Activated CD4-positive, alpha-beta T cell treated with anti-CD3 and anti-CD28 coated beads for 36 hours (primary cell): ENCODE measurements at regions of chr2 and their contacts with region 1.

Region 1: DNA sequence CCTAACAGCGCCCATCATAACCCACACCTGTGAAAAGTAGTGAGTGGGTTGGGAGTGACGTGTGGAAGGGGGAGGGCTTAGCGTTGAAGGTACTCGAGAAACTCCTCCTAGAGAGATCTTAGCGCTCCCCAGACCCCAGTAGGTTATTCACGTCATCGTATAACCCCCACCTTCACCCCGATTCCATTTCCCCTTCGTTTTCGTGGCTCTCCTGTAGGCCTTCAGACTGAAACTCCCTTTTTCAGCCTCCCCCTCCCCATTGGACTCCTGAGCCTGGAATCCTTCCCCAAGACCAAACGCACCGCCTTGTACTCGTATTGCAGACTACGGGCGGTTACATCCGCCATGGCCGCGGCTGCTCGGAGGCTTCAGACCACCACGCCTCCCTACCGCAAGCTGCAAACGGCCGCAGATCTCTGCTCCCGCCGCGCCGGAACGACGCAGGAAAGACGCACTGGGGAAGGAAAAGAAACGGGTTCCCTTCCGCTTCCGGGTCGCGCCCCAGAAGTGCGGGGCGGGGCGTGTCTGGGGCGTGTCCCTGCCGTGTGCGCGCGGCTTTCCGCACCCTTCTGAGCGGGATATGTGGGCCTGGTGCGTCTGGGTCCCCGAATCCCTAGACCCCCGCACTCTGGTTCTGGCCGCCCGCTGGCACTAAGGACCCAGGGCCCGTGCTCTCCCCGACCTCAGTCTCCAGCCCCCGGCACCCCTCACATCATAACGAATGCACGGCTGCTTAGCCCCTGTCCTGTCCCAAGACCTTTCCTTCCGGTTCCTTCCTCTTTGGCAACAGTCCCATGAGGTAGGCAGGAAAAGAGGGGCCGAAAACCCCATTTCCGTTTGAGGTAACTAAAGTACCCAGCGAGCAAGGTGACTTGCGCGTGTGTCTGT is at the start of gene SNRNP200:
- DNase-seq: peak; percentile 96
- ATAC-seq: peak; percentile 97
- H3K4me3 Mint-ChIP-seq: peak within 1 kb of the TSS; percentile 100
- H3K27ac Mint-ChIP-seq: peak within 1 kb of the TSS; percentile 99
- H3K4me1 Mint-ChIP-seq: peaks cover 46% of the 10 kb centered on the region
- H3K27me3 Mint-ChIP-seq: no peaks in the 10 kb centered on the region
- total RNA-seq, gene SNRNP200: 176 to 198 TPM

Region 2: GRCh38 chr2:96174251-96175144 is 130.8 kb before region 1 on chr2:
- CTCF ChIA-PET with region 1: no interaction called
- POLR2A ChIA-PET with region 1: no interaction called
- intact Hi-C with region 1: no loop called
- DNase-seq: peak; percentile 92
- ATAC-seq: peak; percentile 96
- H3K4me3 Mint-ChIP-seq: peak overlapping the region; percentile 60
- H3K27ac Mint-ChIP-seq: peak overlapping the region; percentile 88
- H3K4me1 Mint-ChIP-seq: peaks cover 22% of the 10 kb centered on the region
- H3K27me3 Mint-ChIP-seq: no peaks in the 10 kb centered on the region

Region 3: GRCh38 chr2:96320728-96321622 is 15.6 kb after region 1 on chr2:
- CTCF ChIA-PET with region 1: interaction called, 7 read pairs
- POLR2A ChIA-PET with region 1: interaction called, 7 read pairs
- intact Hi-C with region 1: loop called (anchors 1 kb)
- DNase-seq: peak; percentile 54
- ATAC-seq: peak; percentile 10
- H3K4me3 Mint-ChIP-seq: peak overlapping the region; percentile 73
- H3K27ac Mint-ChIP-seq: peak overlapping the region; percentile 63
- H3K4me1 Mint-ChIP-seq: peaks cover 52% of the 10 kb centered on the region
- H3K27me3 Mint-ChIP-seq: peaks cover 10% of the 10 kb centered on the region

Region 4: GRCh38 chr2:96336104-96336775 is 30.9 kb after region 1 on chr2:
- CTCF ChIA-PET with region 1: interaction called, 6 read pairs
- POLR2A ChIA-PET with region 1: interaction called, 7 read pairs
- intact Hi-C with region 1: loop called (anchors 1 kb)
- DNase-seq: no peak
- ATAC-seq: no peak
- H3K4me3 Mint-ChIP-seq: peak overlapping the region; percentile 88
- H3K27ac Mint-ChIP-seq: peak overlapping the region; percentile 85
- H3K4me1 Mint-ChIP-seq: peaks cover 47% of the 10 kb centered on the region
- H3K27me3 Mint-ChIP-seq: no peaks in the 10 kb centered on the region

Region 5: GRCh38 chr2:96638144-96639121 is 333.1 kb after region 1 on chr2 and contains the start of gene KANSL3:
- CTCF ChIA-PET with region 1: no interaction called
- POLR2A ChIA-PET with region 1: no interaction called
- intact Hi-C with region 1: loop called in 1 of 2 experiments (anchors 1 kb)
- DNase-seq: peak; percentile 94
- ATAC-seq: peak; percentile 86
- H3K4me3 Mint-ChIP-seq: peak within 1 kb of the TSS; percentile 91
- H3K27ac Mint-ChIP-seq: peak within 1 kb of the TSS; percentile 93
- H3K4me1 Mint-ChIP-seq: peaks cover 30% of the 10 kb centered on the region
- H3K27me3 Mint-ChIP-seq: no peaks in the 10 kb centered on the region
- total RNA-seq, gene KANSL3: 33.9 to 39.1 TPM